Activated CD4-positive, alpha-beta memory T cell treated with anti-CD3 and anti-CD28 coated beads for 36 hours (primary cell): ENCODE measurements at regions of chr3 and their contacts with region 1.

Region 1: GRCh38 chr3:160449636-160450598 is at the start of gene TRIM59:
- DNase-seq: peak; percentile 99
- H3K4me3 Mint-ChIP-seq: peak within 1 kb of the TSS; percentile 98
- H3K27ac Mint-ChIP-seq: peak within 1 kb of the TSS; percentile 99
- H3K4me1 Mint-ChIP-seq: peaks cover 28% of the 10 kb centered on the region
- H3K27me3 Mint-ChIP-seq: no peaks in the 10 kb centered on the region
- total RNA-seq, gene TRIM59: 27.3 to 30.0 TPM

Region 2: DNA sequence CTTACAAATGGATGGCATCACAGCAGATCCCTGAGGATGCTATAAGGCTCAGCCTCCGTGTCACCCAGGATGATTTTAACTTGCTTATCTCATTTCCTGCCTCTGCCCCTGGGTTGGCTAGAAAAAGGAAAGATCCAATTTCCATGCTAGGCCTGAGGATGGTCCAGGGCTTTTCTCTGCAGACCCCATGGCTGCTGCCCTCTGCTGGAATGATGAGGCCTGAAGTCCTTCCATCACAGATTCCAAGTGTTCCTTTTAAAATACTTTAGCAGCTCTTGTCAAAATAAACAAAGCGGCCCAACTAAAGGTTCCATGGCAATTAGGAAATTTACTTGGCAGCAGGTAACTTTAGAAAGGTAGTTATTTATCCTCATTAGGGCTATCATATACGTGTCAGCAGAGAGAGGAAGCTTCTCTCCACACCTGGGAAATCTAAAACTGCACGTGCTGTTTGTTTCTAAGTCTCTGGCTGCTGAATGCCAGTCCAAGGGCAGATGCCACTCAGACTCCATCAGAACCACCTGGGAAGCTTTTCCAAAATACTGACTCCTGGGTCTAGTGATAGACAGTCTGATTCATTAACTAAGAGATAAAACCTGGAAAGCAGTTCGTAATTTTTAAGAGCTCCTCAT is 863.2 kb before region 1 on chr3:
- CTCF ChIA-PET with region 1: no interaction called
- POLR2A ChIA-PET with region 1: no interaction called
- intact Hi-C with region 1: no loop called
- DNase-seq: no peak
- H3K4me3 Mint-ChIP-seq: no peak overlapping the region
- H3K27ac Mint-ChIP-seq: no peak overlapping the region
- H3K4me1 Mint-ChIP-seq: no peaks in the 10 kb centered on the region
- H3K27me3 Mint-ChIP-seq: peaks cover 1% of the 10 kb centered on the region

Region 3: DNA sequence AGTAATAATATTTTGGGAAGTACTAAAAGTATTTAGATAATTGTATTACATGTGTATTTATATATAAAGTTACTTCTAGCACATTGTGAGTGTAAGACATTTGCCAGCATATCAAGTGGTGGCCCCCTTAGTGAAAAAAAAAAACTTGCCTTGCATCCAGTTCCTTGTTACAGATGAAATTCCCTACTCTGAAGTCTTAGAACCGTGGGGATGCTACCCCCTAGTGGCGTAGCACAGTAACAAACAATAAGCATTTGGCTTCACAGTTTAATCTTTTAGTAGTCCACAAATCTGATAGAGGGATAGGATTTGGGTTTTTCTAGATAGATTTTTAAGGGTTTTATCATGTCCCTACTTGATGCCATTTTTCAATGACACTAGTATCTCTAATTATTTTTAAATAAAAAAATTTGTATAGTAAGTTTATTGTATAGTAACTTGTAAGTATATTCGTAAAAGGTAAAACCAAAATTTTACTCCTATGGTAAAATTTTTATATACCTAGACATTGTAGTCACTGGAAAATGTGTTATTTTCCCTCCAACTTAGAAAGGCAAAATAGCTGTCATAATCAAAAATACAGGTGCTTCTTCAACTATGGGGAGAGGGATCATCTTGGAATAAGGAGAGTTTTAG is 36.2 kb before region 1 on chr3:
- CTCF ChIA-PET with region 1: interaction called, 12 read pairs
- POLR2A ChIA-PET with region 1: interaction called, 3 read pairs
- intact Hi-C with region 1: no loop called
- DNase-seq: peak; percentile 71
- H3K4me3 Mint-ChIP-seq: no peak overlapping the region
- H3K27ac Mint-ChIP-seq: peak overlapping the region; percentile 33
- H3K4me1 Mint-ChIP-seq: peaks cover 16% of the 10 kb centered on the region
- H3K27me3 Mint-ChIP-seq: no peaks in the 10 kb centered on the region

Region 4: GRCh38 chr3:160434071-160434470 is 15.8 kb before region 1 on chr3:
- CTCF ChIA-PET with region 1: interaction called, 5 read pairs
- POLR2A ChIA-PET with region 1: interaction called, 19 read pairs
- intact Hi-C with region 1: no loop called
- DNase-seq: no peak
- H3K4me3 Mint-ChIP-seq: no peak overlapping the region
- H3K27ac Mint-ChIP-seq: no peak overlapping the region
- H3K4me1 Mint-ChIP-seq: peaks cover 32% of the 10 kb centered on the region
- H3K27me3 Mint-ChIP-seq: no peaks in the 10 kb centered on the region

Region 5: GRCh38 chr3:160486459-160486869 is 36.5 kb after region 1 on chr3:
- CTCF ChIA-PET with region 1: interaction called, 5 read pairs
- POLR2A ChIA-PET with region 1: no interaction called
- intact Hi-C with region 1: loop called (anchors 5 kb)
- DNase-seq: no peak
- H3K4me3 Mint-ChIP-seq: no peak overlapping the region
- H3K27ac Mint-ChIP-seq: no peak overlapping the region
- H3K4me1 Mint-ChIP-seq: peaks cover 2% of the 10 kb centered on the region
- H3K27me3 Mint-ChIP-seq: no peaks in the 10 kb centered on the region

Region 6: DNA sequence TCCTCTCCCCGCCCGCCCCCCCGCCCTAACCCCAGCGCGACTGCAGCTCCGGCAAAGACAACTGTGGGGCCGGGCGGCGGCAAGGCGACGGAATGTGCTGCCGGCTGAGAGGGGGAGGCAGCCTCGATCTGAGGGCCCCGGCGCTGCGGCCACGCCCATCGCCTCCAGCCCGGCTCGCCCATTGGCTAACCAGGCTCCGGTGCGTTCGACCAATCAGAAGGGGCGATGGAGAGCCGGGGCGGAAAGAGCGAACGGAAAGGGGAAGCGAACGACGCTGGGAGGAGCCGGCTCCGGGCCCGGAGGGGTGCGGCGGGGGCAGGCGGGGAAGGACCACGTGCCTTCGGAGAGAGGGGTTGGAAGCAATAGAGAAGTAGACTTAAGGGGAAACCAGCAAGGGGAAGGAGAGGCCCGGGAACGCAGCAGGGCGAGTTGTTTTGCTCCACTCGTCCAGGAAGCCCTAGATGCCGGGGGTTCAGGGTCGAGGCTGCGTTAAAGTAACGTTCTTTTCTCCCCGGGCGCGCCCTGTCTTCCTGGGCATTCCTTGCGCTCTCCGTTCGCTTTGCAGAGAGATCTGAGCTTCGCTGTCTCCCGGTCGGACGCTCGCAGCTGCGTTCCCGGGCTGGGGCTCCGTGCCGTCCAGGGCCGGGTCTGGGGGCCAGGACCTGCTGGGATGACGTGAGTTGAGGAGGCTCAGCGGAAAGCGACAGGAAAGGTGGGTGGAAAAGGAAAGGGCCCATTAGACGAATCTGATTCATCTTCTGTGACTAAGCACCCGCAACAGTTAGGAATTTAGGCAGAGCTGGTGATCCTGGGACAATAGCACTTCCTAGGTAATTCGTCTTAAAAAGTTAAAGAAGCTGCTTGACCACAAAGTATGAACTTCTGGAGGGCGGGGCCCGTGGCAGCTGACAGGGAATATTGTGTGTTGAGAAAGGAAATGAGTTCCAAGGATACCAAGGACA is 115.8 kb after region 1 on chr3 and contains the start of gene KPNA4:
- CTCF ChIA-PET with region 1: no interaction called
- POLR2A ChIA-PET with region 1: interaction called, 3 read pairs
- intact Hi-C with region 1: loop called (anchors 1 kb)
- DNase-seq: peak; percentile 97
- H3K4me3 Mint-ChIP-seq: peak within 1 kb of the TSS; percentile 93
- H3K27ac Mint-ChIP-seq: peak within 1 kb of the TSS; percentile 97
- H3K4me1 Mint-ChIP-seq: peaks cover 45% of the 10 kb centered on the region
- H3K27me3 Mint-ChIP-seq: no peaks in the 10 kb centered on the region
- total RNA-seq, gene KPNA4: 44.9 to 48.4 TPM

Region 7: GRCh38 chr3:160754855-160755747 is 305.2 kb after region 1 on chr3:
- CTCF ChIA-PET with region 1: no interaction called
- POLR2A ChIA-PET with region 1: interaction called, 4 read pairs
- intact Hi-C with region 1: loop called (anchors 1 kb)
- DNase-seq: peak; percentile 94
- H3K4me3 Mint-ChIP-seq: peak overlapping the region; percentile 95
- H3K27ac Mint-ChIP-seq: peak overlapping the region; percentile 90
- H3K4me1 Mint-ChIP-seq: peaks cover 26% of the 10 kb centered on the region
- H3K27me3 Mint-ChIP-seq: peaks cover 12% of the 10 kb centered on the region

Region 8: GRCh38 chr3:160771811-160772459 is 322.0 kb after region 1 on chr3:
- CTCF ChIA-PET with region 1: no interaction called
- POLR2A ChIA-PET with region 1: no interaction called
- intact Hi-C with region 1: no loop called
- DNase-seq: no peak
- H3K4me3 Mint-ChIP-seq: no peak overlapping the region
- H3K27ac Mint-ChIP-seq: no peak overlapping the region
- H3K4me1 Mint-ChIP-seq: peaks cover 6% of the 10 kb centered on the region
- H3K27me3 Mint-ChIP-seq: no peaks in the 10 kb centered on the region